Psoas muscle (tissue), 8 donors: ENCODE measurements at regions of chr3 and their contacts with region 1.

Region 1: DNA sequence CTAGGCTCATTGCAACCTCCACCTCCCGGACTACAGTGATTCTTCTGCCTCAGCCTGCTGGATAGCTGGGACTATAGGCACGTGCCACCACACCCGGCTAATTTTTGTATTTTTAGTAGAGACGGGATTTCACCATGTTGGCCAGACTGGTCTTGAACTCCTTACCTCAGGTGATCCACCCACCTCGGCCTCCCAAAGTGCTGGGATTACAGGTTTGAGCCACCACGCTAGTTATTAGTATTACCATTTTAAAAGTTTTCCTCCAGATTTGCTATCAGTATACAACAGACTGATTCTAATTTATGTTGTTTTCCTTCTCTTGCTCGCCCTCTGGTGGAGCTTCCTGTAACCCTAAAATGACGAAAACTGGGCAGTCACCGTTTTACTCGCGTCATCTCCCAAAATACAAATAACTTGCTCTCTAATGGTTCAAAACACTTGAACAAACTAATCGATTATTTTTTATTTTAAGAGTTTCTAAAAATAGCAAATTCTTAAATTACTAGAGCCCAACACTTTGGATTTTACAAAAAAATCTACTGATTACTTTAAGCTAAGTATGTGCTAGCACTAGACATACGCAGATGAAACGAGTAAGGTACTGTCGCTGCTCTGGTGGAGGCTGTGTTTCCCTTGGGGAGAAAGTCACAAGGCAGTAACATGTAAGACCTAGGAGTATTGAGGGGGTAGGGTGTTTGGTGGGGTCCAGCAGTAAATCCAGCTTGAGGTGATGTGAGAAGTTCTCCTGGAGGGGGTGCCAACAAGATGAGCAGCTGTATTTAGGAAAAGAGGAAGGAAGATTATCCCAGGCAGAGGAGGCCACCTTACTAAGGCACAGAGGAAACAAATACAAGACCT is 203.3 kb downstream of the MBNL1 start:
- DNase-seq: peak; percentile 36 to 50
- ATAC-seq: peak; percentile 60 to 75 (median 74)
- H3K4me3 ChIP-seq: peak overlapping the region; percentile 19
- H3K27ac ChIP-seq: peak overlapping the region; percentile 65
- H3K4me1 ChIP-seq: no peaks in the 10 kb centered on the region
- H3K27me3 ChIP-seq: no peaks in the 10 kb centered on the region
- CTCF ChIP-seq: peak; percentile 73

Region 2: GRCh38 chr3:152071924-152072323 is 400.1 kb before region 1 on chr3:
- intact Hi-C with region 1: loop called (anchors 2 to 10 kb)
- DNase-seq: no peak
- ATAC-seq: peak; percentile 62 to 92 (median 72)
- H3K4me3 ChIP-seq: no peak overlapping the region
- H3K27ac ChIP-seq: no peak overlapping the region
- H3K4me1 ChIP-seq: peaks cover 10% of the 10 kb centered on the region
- H3K27me3 ChIP-seq: no peaks in the 10 kb centered on the region
- CTCF ChIP-seq: peak; percentile 58

Region 3: GRCh38 chr3:152574461-152575079 is 102.5 kb after region 1 on chr3:
- intact Hi-C with region 1: loop called in 1 of 2 experiments (anchors 10 kb)
- DNase-seq: peak; percentile 49 to 75
- ATAC-seq: peak; percentile 52 to 83 (median 73)
- H3K4me3 ChIP-seq: no peak overlapping the region
- H3K27ac ChIP-seq: no peak overlapping the region
- H3K4me1 ChIP-seq: no peaks in the 10 kb centered on the region
- H3K27me3 ChIP-seq: no peaks in the 10 kb centered on the region
- CTCF ChIP-seq: peak; percentile 61